ENCODE measurements at regions of chr21 and their contacts with region 1.

Region 1: GRCh38 chr21:38159355-38159754 is 97.4 kb upstream of the KCNJ15 start:
- DNase-seq: peak; percentile 14
- H3K4me3 Mint-ChIP-seq: no peak overlapping the region
- H3K27ac Mint-ChIP-seq: no peak overlapping the region
- H3K4me1 Mint-ChIP-seq: no peaks in the 10 kb centered on the region
- H3K27me3 Mint-ChIP-seq: peaks cover 19% of the 10 kb centered on the region

Region 2: GRCh38 chr21:38170280-38170679 is 10.9 kb after region 1 on chr21:
- intact Hi-C with region 1: no loop called
- DNase-seq: no peak
- H3K4me3 Mint-ChIP-seq: no peak overlapping the region
- H3K27ac Mint-ChIP-seq: no peak overlapping the region
- H3K4me1 Mint-ChIP-seq: no peaks in the 10 kb centered on the region
- H3K27me3 Mint-ChIP-seq: no peaks in the 10 kb centered on the region

Region 3: DNA sequence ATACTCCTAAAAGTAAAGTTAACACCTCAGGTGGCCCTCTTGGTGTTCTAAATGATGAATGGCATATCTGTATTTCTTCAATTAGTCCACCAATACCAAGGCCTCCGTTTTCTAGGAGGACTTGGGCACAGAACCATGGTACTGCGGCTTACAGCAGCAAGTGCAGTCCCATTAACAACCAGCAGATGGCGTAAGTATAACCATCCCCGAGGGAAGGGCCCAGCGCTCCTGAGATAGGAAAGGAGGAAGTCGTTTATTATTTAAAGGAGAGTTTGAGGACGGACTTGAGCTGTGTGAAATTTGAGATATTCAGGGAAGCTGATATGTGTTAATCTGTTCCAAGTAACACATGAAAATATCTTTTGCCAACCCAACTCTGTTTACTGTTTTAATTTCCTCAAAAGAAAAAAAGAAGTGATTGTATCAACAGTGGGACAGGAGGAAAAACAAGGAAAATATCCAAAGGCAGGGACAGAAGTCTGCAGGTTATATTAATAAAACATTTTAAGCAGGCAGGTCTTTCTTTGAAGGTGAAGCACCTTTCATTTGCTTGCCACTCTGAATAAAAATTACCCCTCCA is 59.8 kb after region 1 on chr21:
- intact Hi-C with region 1: loop called (anchors 2 kb)
- DNase-seq: peak; percentile 35
- H3K4me3 Mint-ChIP-seq: no peak overlapping the region
- H3K27ac Mint-ChIP-seq: no peak overlapping the region
- H3K4me1 Mint-ChIP-seq: peaks cover 6% of the 10 kb centered on the region
- H3K27me3 Mint-ChIP-seq: peaks cover 6% of the 10 kb centered on the region

Region 4: DNA sequence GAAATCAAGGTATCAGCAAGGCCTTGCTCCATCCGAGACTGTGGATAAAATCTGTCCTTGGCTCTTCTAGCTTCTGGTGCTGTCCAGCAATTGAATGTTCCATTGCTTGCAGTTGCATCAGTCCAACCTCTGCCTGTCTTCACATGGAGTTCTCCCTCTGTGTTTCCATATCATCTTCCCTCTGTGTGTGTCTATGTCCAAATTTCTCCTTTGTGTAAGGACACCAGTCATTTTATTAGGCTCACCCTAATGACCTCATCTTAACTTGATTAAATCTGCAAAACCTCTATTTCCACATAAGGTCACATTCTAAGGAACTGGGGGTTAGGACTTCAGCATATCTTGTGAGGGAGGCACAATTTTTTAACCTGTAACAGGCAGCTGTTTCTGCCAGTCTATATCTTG is 254.7 kb after region 1 on chr21:
- intact Hi-C with region 1: no loop called
- DNase-seq: no peak
- H3K4me3 Mint-ChIP-seq: no peak overlapping the region
- H3K27ac Mint-ChIP-seq: no peak overlapping the region
- H3K4me1 Mint-ChIP-seq: peaks cover 4% of the 10 kb centered on the region
- H3K27me3 Mint-ChIP-seq: peaks cover 19% of the 10 kb centered on the region

Measured in activated T-helper 2 cell treated with anti-CD3 and anti-CD28 coated beads, Interferon-gamma antibody, Interleukin-2, Interleukin-4, amounts not matched to agents 10 μg/mL and 5 μg/mL and 100 μg/mL, durations not matched to agents 14 hours and 24 hours and 36 hours (primary cell).